Ovary (tissue), 10 donors: ENCODE measurements at regions of chr2 and their contacts with region 1.

Region 1: DNA sequence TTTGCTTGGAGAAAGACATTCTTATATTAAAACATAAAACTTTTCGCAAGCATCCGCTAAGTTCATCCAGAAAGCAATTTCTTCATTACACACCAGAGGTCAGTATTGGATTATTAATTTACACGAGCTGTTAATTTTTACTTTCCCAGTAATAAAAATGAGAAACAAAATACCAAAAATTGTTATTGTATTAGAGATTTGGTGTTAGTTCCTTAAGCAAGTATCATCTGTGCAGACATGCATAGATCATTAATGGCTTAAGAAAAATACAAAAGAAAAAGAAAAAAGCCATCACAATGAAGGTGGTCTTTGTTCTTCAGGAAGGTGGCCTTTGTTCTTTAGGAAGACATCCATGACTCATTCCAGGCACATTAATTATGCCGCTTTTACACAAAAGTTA is 53.6 kb upstream of the HNMT start:
- DNase-seq: no peak
- H3K4me3 ChIP-seq: no peak overlapping the region
- H3K27ac ChIP-seq: no peak overlapping the region
- H3K4me1 ChIP-seq: no peaks in the 10 kb centered on the region
- H3K27me3 ChIP-seq: no peaks in the 10 kb centered on the region
- CTCF ChIP-seq: peak in 2 of 3 donors; percentile 42 to 62
- EP300 ChIP-seq: no peak
- POLR2A ChIP-seq: no peak

Region 2: GRCh38 chr2:138787053-138787666 is 876.5 kb after region 1 on chr2:
- intact Hi-C with region 1: loop called in 3 of 4 experiments (anchors 5 kb)
- DNase-seq: peak in 1 of 5 donors; percentile 25
- H3K4me3 ChIP-seq: no peak overlapping the region
- H3K27ac ChIP-seq: no peak overlapping the region
- H3K4me1 ChIP-seq: no peaks in the 10 kb centered on the region
- H3K27me3 ChIP-seq: no peaks in the 10 kb centered on the region
- CTCF ChIP-seq: peak; percentile 18 to 63 (median 39)
- EP300 ChIP-seq: no peak
- POLR2A ChIP-seq: no peak

Region 3: DNA sequence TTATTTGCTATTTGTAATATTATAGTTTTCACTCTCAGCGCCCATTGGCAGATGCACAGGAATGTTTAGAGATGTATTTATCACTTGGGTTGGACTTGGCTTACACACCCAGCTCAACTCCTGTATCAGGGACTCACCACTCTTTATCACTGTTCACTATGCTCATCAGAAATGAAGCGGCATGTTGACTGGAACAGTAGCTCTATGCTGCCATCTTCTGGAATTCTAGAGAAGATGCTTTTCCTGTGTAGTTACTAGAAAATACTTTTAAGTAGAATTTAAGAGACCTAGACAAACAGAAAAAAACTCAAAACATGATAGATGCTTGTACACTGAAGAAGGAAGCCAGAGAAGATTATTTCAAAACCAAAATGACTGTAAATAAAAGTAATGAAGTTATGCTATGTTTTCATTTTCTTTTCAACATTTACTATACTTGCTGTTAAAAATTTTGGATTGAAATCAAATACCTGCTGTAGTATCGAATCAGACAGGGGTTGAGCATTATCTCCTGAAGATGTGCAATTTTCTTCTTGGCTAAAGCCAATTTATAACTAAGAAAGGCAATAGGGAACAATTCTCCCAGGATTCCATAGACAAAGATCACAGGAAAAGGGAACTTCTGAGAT is 916.9 kb after region 1 on chr2:
- intact Hi-C with region 1: loop called in 2 of 4 experiments (anchors 2 to 5 kb)
- DNase-seq: peak in 1 of 5 donors; percentile 24
- H3K4me3 ChIP-seq: no peak overlapping the region
- H3K27ac ChIP-seq: no peak overlapping the region
- H3K4me1 ChIP-seq: no peaks in the 10 kb centered on the region
- H3K27me3 ChIP-seq: no peaks in the 10 kb centered on the region
- CTCF ChIP-seq: peak; percentile 35 to 66 (median 61)
- EP300 ChIP-seq: no peak
- POLR2A ChIP-seq: no peak